IMR-90 (cell line): ENCODE measurements at regions of chr14 and their contacts with region 1.

Region 1: GRCh38 chr14:100828031-100828769 is 2.3 kb downstream of the MEG3 start:
- DNase-seq: peak; percentile 81
- ATAC-seq: peak; percentile 54
- H3K4me3 ChIP-seq: peak overlapping the region; percentile 81
- H3K27ac ChIP-seq: no peak overlapping the region
- H3K4me1 ChIP-seq: peaks cover 6% of the 10 kb centered on the region; the same call in 1 of the 2 replicates
- H3K27me3 ChIP-seq: no peaks in the 10 kb centered on the region
- CTCF ChIP-seq: peak; percentile 77
- POLR2A ChIP-seq: no peak
- RAD21 ChIP-seq: peak; percentile 61

Region 2: GRCh38 chr14:100031536-100032281 is 796.5 kb before region 1 on chr14:
- CTCF ChIA-PET with region 1: no interaction called
- POLR2A ChIA-PET with region 1: no interaction called
- dilution Hi-C with region 1: no loop called
- in situ Hi-C with region 1: no loop called
- intact Hi-C with region 1: no loop called
- DNase-seq: peak; percentile 99
- ATAC-seq: peak; percentile 73
- H3K4me3 ChIP-seq: peak overlapping the region; percentile 48
- H3K27ac ChIP-seq: peak overlapping the region; percentile 99
- H3K4me1 ChIP-seq: peaks cover 21% of the 10 kb centered on the region
- H3K27me3 ChIP-seq: no peaks in the 10 kb centered on the region
- CTCF ChIP-seq: 0 out of 2 replicates have a peak, but pooled peaks have one; percentile 6
- POLR2A ChIP-seq: peak; percentile 80; the same call in 1 of the 2 replicates
- RAD21 ChIP-seq: peak; percentile 6; the same call in 1 of the 2 replicates

Region 3: DNA sequence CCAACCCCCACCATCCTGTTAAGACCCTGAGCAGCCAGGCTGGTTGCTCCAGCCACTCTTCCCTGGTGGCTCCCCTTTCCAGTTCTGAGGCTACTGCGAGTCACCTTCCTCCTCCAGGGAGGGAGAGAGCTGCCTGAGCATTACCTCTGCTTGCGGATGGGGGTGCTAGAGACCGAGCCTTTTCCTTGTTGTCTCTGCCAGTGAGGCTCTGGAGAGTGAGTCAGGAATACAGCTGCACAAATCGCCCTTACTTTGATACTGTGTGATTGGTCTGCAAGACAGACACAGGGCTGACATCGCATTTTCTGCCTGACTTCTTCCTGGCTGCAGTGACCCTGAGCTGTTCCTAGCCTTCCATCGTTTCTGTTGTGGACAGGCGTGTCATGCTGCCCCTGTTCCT is 410.7 kb before region 1 on chr14:
- CTCF ChIA-PET with region 1: no interaction called
- POLR2A ChIA-PET with region 1: no interaction called
- dilution Hi-C with region 1: no loop called
- in situ Hi-C with region 1: no loop called
- intact Hi-C with region 1: loop called (anchors 1 kb)
- DNase-seq: peak; percentile 97
- ATAC-seq: peak; percentile 97
- H3K4me3 ChIP-seq: no peak overlapping the region
- H3K27ac ChIP-seq: 0 out of 2 replicates have a peak overlapping the region, but pooled peaks have one; percentile 5
- H3K4me1 ChIP-seq: peaks cover 10% of the 10 kb centered on the region
- H3K27me3 ChIP-seq: no peaks in the 10 kb centered on the region
- CTCF ChIP-seq: peak; percentile 96
- POLR2A ChIP-seq: peak; percentile 65
- RAD21 ChIP-seq: peak; percentile 98

Region 4: GRCh38 chr14:100522616-100523099 is 305.5 kb before region 1 on chr14:
- CTCF ChIA-PET with region 1: no interaction called
- POLR2A ChIA-PET with region 1: no interaction called
- dilution Hi-C with region 1: no loop called
- in situ Hi-C with region 1: no loop called
- intact Hi-C with region 1: no loop called
- DNase-seq: no peak
- ATAC-seq: no peak
- H3K4me3 ChIP-seq: no peak overlapping the region
- H3K27ac ChIP-seq: no peak overlapping the region
- H3K4me1 ChIP-seq: no peaks in the 10 kb centered on the region
- H3K27me3 ChIP-seq: no peaks in the 10 kb centered on the region
- CTCF ChIP-seq: no peak
- POLR2A ChIP-seq: no peak
- RAD21 ChIP-seq: no peak

Region 5: DNA sequence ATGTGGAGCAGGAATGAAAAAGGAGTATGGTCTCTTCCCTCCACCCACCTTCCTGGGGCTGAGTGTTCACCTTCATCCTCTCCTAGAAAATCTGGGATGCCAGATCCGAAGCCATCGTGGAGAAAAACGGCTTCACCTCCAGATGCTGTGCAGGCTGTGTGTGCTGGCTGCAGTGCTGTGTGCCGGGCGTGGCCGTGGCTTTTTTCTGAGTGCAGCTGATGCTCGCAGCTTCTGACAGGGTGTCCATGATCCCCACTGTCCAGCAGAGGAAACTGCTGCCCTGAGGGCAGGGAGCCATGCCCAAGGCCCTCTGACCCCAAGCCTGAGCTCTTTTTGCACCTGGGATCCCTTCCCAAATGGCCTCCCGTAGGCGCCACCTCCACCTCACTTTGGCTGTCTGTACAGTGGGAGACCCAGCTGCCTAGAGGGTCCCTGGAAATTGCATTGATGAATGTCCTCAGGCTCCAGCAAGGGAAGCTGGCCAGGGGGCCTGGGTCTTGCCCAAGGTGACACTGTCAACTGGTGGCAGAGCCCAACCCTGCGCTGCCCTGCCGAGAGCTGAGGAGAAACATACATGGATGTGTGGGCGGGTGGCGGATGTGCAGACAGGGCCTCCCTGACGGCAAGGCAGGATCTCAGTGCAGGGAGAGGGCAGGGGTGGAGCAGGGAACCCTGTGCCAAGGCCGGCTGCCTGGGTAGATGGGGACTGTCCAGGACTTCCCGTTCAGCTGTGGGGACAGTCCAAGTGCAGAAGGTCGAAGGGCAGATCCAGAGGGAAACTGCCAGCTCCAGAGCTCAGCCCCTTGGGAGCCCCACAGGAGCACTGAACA is 294.3 kb before region 1 on chr14:
- CTCF ChIA-PET with region 1: no interaction called
- POLR2A ChIA-PET with region 1: no interaction called
- dilution Hi-C with region 1: no loop called
- in situ Hi-C with region 1: no loop called
- intact Hi-C with region 1: loop called (anchors 5 kb)
- DNase-seq: no peak
- ATAC-seq: no peak
- H3K4me3 ChIP-seq: no peak overlapping the region
- H3K27ac ChIP-seq: no peak overlapping the region
- H3K4me1 ChIP-seq: no peaks in the 10 kb centered on the region; the same call in 1 of the 2 replicates
- H3K27me3 ChIP-seq: no peaks in the 10 kb centered on the region
- CTCF ChIP-seq: no peak
- POLR2A ChIP-seq: no peak
- RAD21 ChIP-seq: no peak

Region 6: GRCh38 chr14:100662879-100663760 is 165.1 kb before region 1 on chr14:
- CTCF ChIA-PET with region 1: no interaction called
- POLR2A ChIA-PET with region 1: no interaction called
- dilution Hi-C with region 1: no loop called
- in situ Hi-C with region 1: loop called (anchors 5 kb)
- intact Hi-C with region 1: loop called (anchors 1 kb)
- DNase-seq: peak; percentile 61
- ATAC-seq: no peak; the same call in 1 of the 2 replicates
- H3K4me3 ChIP-seq: no peak overlapping the region
- H3K27ac ChIP-seq: no peak overlapping the region
- H3K4me1 ChIP-seq: peaks cover 12% of the 10 kb centered on the region
- H3K27me3 ChIP-seq: peaks cover 21% of the 10 kb centered on the region
- CTCF ChIP-seq: peak; percentile 82
- POLR2A ChIP-seq: no peak
- RAD21 ChIP-seq: peak; percentile 79

Region 7: DNA sequence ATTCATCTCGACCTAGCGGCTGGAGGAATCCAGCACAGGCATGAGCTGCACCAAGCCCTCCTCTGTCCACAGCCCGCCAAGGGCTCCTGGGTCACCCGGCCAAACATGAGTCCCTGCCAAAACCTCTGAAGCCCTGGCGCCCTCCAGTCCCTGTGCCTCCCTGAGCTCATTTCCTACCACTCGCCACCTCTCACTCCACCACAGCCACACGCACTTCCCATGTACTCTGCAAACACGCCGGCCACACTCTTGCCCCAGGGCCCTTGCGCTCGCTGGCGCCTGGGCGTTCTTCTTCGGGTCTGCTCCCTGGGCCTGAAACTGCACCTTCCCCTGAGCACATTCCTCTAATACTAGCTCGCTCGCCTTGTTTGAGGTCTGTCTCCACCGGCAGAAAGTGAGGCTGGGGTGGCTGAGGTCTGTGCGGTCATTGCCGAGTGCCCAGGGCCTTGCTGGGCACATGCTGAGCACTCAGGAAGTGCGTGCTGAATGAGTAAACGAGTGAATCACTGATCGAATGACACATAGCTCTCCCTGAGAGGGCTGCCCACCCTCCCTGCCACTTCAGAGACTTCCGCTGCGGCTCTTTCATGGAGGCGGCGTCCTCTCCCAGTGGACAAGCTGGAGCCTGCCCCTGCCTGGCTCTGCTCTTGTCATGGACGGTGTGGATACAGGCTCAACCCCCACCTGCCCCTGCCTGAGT is 135.2 kb before region 1 on chr14:
- CTCF ChIA-PET with region 1: no interaction called
- POLR2A ChIA-PET with region 1: no interaction called
- dilution Hi-C with region 1: no loop called
- in situ Hi-C with region 1: no loop called
- intact Hi-C with region 1: loop called (anchors 10 kb)
- DNase-seq: peak; percentile 94
- ATAC-seq: peak; percentile 84
- H3K4me3 ChIP-seq: no peak overlapping the region
- H3K27ac ChIP-seq: peak overlapping the region; percentile 70
- H3K4me1 ChIP-seq: peaks cover 23% of the 10 kb centered on the region
- H3K27me3 ChIP-seq: peaks cover 3% of the 10 kb centered on the region; the same call in 1 of the 2 replicates
- CTCF ChIP-seq: no peak
- POLR2A ChIP-seq: peak; percentile 27; the same call in 1 of the 2 replicates
- RAD21 ChIP-seq: no peak

Region 8: GRCh38 chr14:100747021-100747586 is 81.1 kb before region 1 on chr14:
- CTCF ChIA-PET with region 1: interaction called, 3 read pairs
- POLR2A ChIA-PET with region 1: no interaction called
- dilution Hi-C with region 1: no loop called
- in situ Hi-C with region 1: no loop called
- intact Hi-C with region 1: loop called (anchors 5 kb)
- DNase-seq: peak; percentile 92
- ATAC-seq: peak; percentile 91
- H3K4me3 ChIP-seq: no peak overlapping the region
- H3K27ac ChIP-seq: peak overlapping the region; percentile 64
- H3K4me1 ChIP-seq: peaks cover 7% of the 10 kb centered on the region; the same call in 1 of the 2 replicates
- H3K27me3 ChIP-seq: peaks cover 4% of the 10 kb centered on the region
- CTCF ChIP-seq: 0 out of 2 replicates have a peak, but pooled peaks have one; percentile 9
- POLR2A ChIP-seq: no peak
- RAD21 ChIP-seq: peak; percentile 39; the same call in 1 of the 2 replicates